CD8-positive, alpha-beta memory T cell (primary cell): ENCODE measurements at regions of chr9 and their contacts with region 1.

Region 1: GRCh38 chr9:111661150-111661801 is at the start of gene GNG10:
- DNase-seq: peak; percentile 55 to 74 (median 69)
- H3K4me3 ChIP-seq: peak within 1 kb of the TSS; percentile 83
- H3K4me3 Mint-ChIP-seq: peak within 1 kb of the TSS; percentile 93 to 98 (median 96)
- H3K27ac ChIP-seq: peak within 1 kb of the TSS; percentile 62
- H3K27ac Mint-ChIP-seq: peak within 1 kb of the TSS; percentile 63 to 98 (median 90)
- H3K4me1 ChIP-seq: peaks cover 30% of the 10 kb centered on the region
- H3K4me1 Mint-ChIP-seq: peaks cover 27 to 47% (median 43%) of the 10 kb centered on the region in 3 donors
- H3K27me3 ChIP-seq: no peaks in the 10 kb centered on the region
- H3K27me3 Mint-ChIP-seq: no peaks in the 10 kb centered on the region
- total RNA-seq, gene GNG10: 21.9 to 25.1 TPM

Region 2: DNA sequence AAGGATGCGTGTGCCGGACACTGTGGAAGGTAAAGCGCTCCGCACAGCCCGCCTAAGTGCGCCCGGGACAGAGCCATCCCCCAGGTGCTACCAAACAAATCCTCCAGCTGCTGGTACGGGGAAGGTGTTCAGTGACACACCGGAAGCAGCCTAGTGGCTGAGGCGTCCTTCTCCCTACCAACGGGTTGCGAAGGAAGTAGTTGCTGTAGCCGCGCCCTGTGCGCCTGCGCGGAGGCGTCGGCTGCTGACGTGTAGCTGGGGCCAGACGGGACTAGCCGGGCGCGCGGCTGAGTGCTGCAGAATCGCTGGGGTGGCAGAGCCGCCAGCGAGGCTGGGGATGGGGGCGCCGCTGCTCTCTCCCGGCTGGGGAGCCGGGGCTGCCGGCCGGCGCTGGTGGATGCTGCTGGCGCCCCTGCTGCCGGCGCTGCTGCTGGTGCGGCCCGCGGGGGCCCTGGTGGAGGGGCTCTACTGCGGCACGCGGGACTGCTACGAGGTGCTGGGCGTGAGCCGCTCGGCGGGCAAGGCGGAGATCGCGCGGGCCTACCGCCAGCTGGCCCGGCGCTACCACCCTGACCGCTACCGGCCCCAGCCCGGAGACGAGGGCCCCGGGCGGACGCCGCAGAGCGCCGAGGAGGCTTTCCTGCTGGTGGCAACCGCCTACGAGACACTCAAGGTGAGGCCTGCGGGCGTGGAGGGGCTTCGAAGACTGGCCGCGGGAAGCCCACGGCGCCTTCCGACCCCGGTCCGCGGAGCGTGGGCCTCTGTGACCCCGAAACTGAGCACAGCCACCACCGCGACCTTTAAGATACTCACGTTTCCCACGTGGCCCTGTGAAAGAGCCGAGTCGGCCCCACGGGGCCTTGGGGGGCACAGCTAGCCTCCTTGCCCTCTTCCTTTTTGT is 30.0 kb before region 1 on chr9 and contains the start of gene DNAJC25:
- CTCF ChIA-PET with region 1: interaction called, 4 read pairs
- POLR2A ChIA-PET with region 1: interaction called, 10 read pairs
- DNase-seq: peak; percentile 94 to 98 (median 97)
- H3K4me3 ChIP-seq: peak within 1 kb of the TSS; percentile 95
- H3K4me3 Mint-ChIP-seq: peak within 1 kb of the TSS; percentile 92 to 99 (median 95)
- H3K27ac ChIP-seq: peak within 1 kb of the TSS; percentile 82
- H3K27ac Mint-ChIP-seq: peak within 1 kb of the TSS; percentile 85 to 95 (median 90)
- H3K4me1 ChIP-seq: peaks cover 20% of the 10 kb centered on the region
- H3K4me1 Mint-ChIP-seq: peaks cover 43 to 56% (median 54%) of the 10 kb centered on the region in 3 donors
- H3K27me3 ChIP-seq: no peaks in the 10 kb centered on the region
- H3K27me3 Mint-ChIP-seq: no peaks in the 10 kb centered on the region
- total RNA-seq, gene DNAJC25: 5.7 to 6.0 TPM

Region 3: GRCh38 chr9:111700776-111701175 is 39.5 kb after region 1 on chr9:
- CTCF ChIA-PET with region 1: no interaction called
- POLR2A ChIA-PET with region 1: no interaction called
- DNase-seq: no peak
- H3K4me3 ChIP-seq: no peak overlapping the region
- H3K4me3 Mint-ChIP-seq: no peak overlapping the region
- H3K27ac ChIP-seq: no peak overlapping the region
- H3K27ac Mint-ChIP-seq: peak overlapping the region in 1 of 8 donors; percentile 52
- H3K4me1 ChIP-seq: no peaks in the 10 kb centered on the region
- H3K4me1 Mint-ChIP-seq: peaks cover 0 to 6% (median 2%) of the 10 kb centered on the region in 3 donors
- H3K27me3 ChIP-seq: no peaks in the 10 kb centered on the region
- H3K27me3 Mint-ChIP-seq: peaks cover 0 to 4% of the 10 kb centered on the region in 2 donors